ENCODE measurements at regions of chr10 and their contacts with region 1.

Region 1: GRCh38 chr10:72061491-72061890 is 26.9 kb downstream of the SPOCK2 start:
- DNase-seq: no peak
- ATAC-seq: peak; percentile 22
- H3K4me3 ChIP-seq: no peak overlapping the region
- H3K4me3 Mint-ChIP-seq: peak overlapping the region in 2 of 10 donors; percentile 32 to 66
- H3K27ac ChIP-seq: no peak overlapping the region
- H3K27ac Mint-ChIP-seq: peak overlapping the region; percentile 34 to 91 (median 80)
- H3K4me1 ChIP-seq: no peaks in the 10 kb centered on the region
- H3K4me1 Mint-ChIP-seq: peaks cover 0 to 37% (median 24%) of the 10 kb centered on the region in 7 donors
- H3K27me3 ChIP-seq: no peaks in the 10 kb centered on the region
- H3K27me3 Mint-ChIP-seq: no peaks in the 10 kb centered on the region

Region 2: DNA sequence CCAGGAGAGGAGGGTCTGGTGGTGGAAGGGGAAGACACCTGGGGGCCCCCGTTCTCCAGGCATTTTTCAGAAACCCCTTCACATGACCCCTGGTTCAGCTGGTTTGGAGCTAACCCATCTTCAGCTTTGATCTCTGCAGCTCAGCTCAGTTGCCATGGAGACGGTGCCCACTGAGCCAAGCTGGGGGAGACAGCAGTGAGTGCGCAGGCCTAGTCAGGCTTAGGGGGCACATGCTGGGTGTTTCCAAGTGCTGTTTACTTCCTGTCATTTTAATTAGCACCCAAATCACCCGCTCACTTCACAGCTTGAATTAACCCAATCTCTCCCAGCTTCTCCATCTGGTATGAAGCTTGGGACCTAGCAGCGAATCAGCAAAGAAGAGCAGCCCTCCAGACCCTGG is 17.9 kb after region 1 on chr10:
- CTCF ChIA-PET with region 1: interaction called, 3 read pairs
- POLR2A ChIA-PET with region 1: interaction called, 9 read pairs
- intact Hi-C with region 1: loop called in 1 of 2 experiments (anchors 2 kb)
- DNase-seq: peak in 6 of 9 donors; percentile 61 to 87 (median 72)
- ATAC-seq: peak; percentile 71
- H3K4me3 ChIP-seq: peak overlapping the region; percentile 21
- H3K4me3 Mint-ChIP-seq: peak overlapping the region; percentile 51 to 98 (median 84)
- H3K27ac ChIP-seq: peak overlapping the region; percentile 99
- H3K27ac Mint-ChIP-seq: peak overlapping the region; percentile 56 to 96 (median 91)
- H3K4me1 ChIP-seq: peaks cover 91 to 93% of the 10 kb centered on the region in 2 donors
- H3K4me1 Mint-ChIP-seq: peaks cover 70 to 98% (median 89%) of the 10 kb centered on the region in 7 donors
- H3K27me3 ChIP-seq: no peaks in the 10 kb centered on the region
- H3K27me3 Mint-ChIP-seq: no peaks in the 10 kb centered on the region

Region 3: DNA sequence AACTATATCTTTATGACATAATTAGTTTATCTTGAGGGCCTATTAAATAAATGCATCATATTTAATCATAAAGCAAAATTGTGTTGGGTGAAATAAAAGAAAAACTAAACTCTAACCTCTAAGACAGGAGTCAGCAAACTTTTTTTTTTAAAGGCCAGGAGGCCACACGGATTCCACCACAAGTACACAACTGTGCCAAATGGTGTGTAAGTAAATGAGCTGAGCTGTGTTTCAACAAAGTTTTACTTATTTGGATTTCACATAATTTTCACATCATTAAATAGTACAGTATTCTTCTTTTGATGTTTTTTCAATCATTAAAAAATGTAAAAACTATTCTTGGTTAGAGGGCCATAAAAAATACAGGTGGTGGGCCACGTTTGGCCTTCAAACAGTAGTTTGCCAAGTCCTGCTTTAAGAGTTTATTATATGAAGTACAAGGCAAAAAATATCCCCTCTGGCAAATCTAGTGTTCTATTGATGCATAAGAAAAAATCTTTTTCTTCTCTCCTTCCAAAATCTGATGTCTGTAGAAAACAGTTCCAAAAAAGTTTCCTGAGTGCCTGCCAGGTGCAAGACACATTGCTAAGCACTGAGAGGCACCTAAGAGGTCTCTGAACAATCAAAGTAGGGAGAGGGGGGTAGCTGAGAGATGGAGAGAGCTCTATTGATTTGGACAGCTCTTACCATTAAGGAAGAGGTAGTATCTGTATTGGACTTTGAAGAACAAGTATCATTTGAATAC is 53.4 kb after region 1 on chr10:
- CTCF ChIA-PET with region 1: no interaction called
- POLR2A ChIA-PET with region 1: no interaction called
- intact Hi-C with region 1: no loop called
- DNase-seq: no peak
- ATAC-seq: no peak
- H3K4me3 ChIP-seq: no peak overlapping the region
- H3K4me3 Mint-ChIP-seq: peak overlapping the region in 1 of 10 donors; percentile 16
- H3K27ac ChIP-seq: no peak overlapping the region
- H3K27ac Mint-ChIP-seq: peak overlapping the region in 4 of 9 donors; percentile 13 to 76 (median 35)
- H3K4me1 ChIP-seq: peaks cover 0 to 13% of the 10 kb centered on the region in 2 donors
- H3K4me1 Mint-ChIP-seq: peaks cover 17 to 71% (median 53%) of the 10 kb centered on the region in 7 donors
- H3K27me3 ChIP-seq: no peaks in the 10 kb centered on the region
- H3K27me3 Mint-ChIP-seq: no peaks in the 10 kb centered on the region